CD4-positive, alpha-beta T cell (primary cell): ENCODE measurements at regions of chr7 and their contacts with region 1.

Region 1: DNA sequence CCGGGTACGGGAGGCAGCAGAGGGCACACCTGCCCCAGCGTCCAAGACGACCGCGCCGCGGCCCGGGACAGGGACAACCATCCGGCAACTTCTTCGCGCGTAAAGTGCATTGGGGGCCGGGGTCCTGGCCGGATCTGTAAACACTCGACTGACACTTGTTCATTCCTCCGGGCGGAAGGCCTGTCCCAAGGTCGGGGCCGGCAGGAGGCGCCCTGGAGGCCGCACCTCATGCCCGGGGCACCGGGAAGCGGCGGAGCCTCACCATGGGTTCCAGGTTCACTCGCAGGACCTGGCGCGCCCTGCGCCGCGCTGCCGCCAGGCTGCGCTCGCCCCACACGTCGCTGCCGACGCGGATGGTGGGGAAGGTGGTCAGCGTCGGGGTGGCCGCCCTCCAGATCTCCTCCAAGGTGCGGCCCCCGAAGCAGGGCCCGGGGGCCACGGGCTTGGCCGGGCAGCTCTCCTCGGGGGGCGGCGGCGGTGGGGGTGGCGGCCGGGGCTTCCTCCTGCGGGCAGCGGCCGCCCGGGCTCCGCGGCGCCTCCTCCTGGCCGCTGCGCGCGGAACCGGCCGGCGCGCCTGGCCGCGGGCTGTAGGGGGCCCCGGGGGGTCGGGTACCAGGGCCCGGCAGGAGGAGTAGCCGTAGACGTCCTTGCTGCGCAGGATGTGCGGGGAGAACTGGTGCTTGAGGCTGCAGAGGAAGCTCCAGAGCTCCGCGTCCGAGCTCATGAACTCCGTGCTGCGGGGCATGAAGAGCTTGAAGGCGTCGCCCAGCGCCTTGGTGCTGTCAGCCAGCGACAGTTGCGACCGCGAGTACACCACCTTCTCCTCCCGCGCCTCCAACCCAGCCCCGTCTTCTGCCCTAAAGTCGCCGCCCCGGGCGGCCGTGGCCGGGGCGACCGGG is 746 bp downstream of the CCDC71L start:
- DNase-seq: peak; percentile 58 to 91 (median 72)
- ATAC-seq: peak; percentile 58
- H3K4me3 ChIP-seq: peak overlapping the region; percentile 71
- H3K4me3 Mint-ChIP-seq: peak overlapping the region; percentile 96
- H3K27ac ChIP-seq: peak overlapping the region; percentile 44 to 71
- H3K27ac Mint-ChIP-seq: peak overlapping the region; percentile 92
- H3K4me1 ChIP-seq: peaks cover 20% of the 10 kb centered on the region
- H3K4me1 Mint-ChIP-seq: peaks cover 40% of the 10 kb centered on the region
- H3K27me3 ChIP-seq: no peaks in the 10 kb centered on the region
- H3K27me3 Mint-ChIP-seq: no peaks in the 10 kb centered on the region
- CTCF ChIP-seq: peak; percentile 78

Region 2: GRCh38 chr7:106071356-106071998 is 588.7 kb before region 1 on chr7:
- CTCF ChIA-PET with region 1: no interaction called
- POLR2A ChIA-PET with region 1: no interaction called
- intact Hi-C with region 1: no loop called
- DNase-seq: peak in 13 of 14 experiments; percentile 11 to 83 (median 34)
- ATAC-seq: peak; percentile 95
- H3K4me3 ChIP-seq: peak overlapping the region; percentile 44
- H3K4me3 Mint-ChIP-seq: peak overlapping the region; percentile 54
- H3K27ac ChIP-seq: peak overlapping the region; percentile 79 to 86
- H3K27ac Mint-ChIP-seq: peak overlapping the region; percentile 95
- H3K4me1 ChIP-seq: peaks cover 44% of the 10 kb centered on the region
- H3K4me1 Mint-ChIP-seq: peaks cover 63% of the 10 kb centered on the region
- H3K27me3 ChIP-seq: no peaks in the 10 kb centered on the region
- H3K27me3 Mint-ChIP-seq: no peaks in the 10 kb centered on the region
- CTCF ChIP-seq: no peak

Region 3: DNA sequence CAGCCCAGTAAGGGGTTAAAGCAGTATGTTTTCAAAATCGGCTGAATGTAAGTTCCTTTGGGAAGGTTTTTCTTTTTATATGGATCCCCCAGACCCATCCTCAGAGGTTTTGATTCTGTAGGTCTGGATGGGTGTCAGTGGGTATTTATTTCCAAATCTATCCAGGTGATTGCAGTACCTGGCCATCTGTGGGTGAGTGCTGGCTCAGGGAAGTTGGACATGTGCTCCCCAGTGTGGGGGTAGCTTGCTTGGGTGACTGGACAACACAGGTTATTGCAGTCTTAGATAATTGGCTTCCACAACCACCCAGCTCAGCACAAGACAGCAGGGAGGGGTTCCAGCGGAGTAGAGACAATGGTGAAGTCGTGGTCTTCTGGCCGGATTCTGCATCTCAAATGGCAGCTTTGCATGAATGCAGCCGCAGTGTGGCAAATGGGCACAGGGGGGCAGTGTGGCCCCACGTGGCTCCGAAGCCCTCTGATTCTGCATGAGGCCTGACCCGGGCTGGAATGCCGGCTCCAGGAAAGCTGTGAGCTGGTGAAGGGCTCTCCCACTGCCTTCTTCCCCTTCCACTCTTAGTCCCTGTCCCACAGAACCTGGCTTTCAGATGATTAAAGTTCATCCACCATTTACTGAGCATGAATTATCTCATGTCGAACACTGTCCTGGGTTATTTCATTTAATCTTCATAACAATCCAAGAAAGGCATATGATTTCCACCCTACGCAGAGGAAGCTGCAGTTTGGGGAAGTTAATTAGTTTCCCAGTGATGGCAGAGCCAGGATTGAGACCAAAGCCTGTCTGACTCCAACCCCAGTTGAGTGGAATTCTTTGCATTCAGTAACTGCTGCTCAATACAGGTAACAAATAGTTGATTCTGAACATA is 483.6 kb before region 1 on chr7:
- CTCF ChIA-PET with region 1: interaction called, 3 read pairs
- POLR2A ChIA-PET with region 1: no interaction called
- intact Hi-C with region 1: loop called in 1 of 2 experiments (anchors 10 kb)
- DNase-seq: peak; percentile 37 to 79 (median 61)
- ATAC-seq: peak; percentile 82
- H3K4me3 ChIP-seq: no peak overlapping the region
- H3K4me3 Mint-ChIP-seq: no peak overlapping the region
- H3K27ac ChIP-seq: no peak overlapping the region
- H3K27ac Mint-ChIP-seq: no peak overlapping the region
- H3K4me1 ChIP-seq: peaks cover 6% of the 10 kb centered on the region
- H3K4me1 Mint-ChIP-seq: peaks cover 5% of the 10 kb centered on the region
- H3K27me3 ChIP-seq: peaks cover 0 to 4% of the 10 kb centered on the region in 2 experiments
- H3K27me3 Mint-ChIP-seq: peaks cover 19% of the 10 kb centered on the region
- CTCF ChIP-seq: peak; percentile 95

Region 4: GRCh38 chr7:106598663-106599342 is 61.4 kb before region 1 on chr7:
- CTCF ChIA-PET with region 1: no interaction called
- POLR2A ChIA-PET with region 1: interaction called, 5 read pairs
- intact Hi-C with region 1: loop called in 1 of 2 experiments (anchors 2 kb)
- DNase-seq: peak; percentile 30 to 90 (median 50)
- ATAC-seq: peak; percentile 100
- H3K4me3 ChIP-seq: no peak overlapping the region
- H3K4me3 Mint-ChIP-seq: peak overlapping the region; percentile 42
- H3K27ac ChIP-seq: no peak overlapping the region
- H3K27ac Mint-ChIP-seq: peak overlapping the region; percentile 59
- H3K4me1 ChIP-seq: peaks cover 8% of the 10 kb centered on the region
- H3K4me1 Mint-ChIP-seq: peaks cover 8% of the 10 kb centered on the region
- H3K27me3 ChIP-seq: no peaks in the 10 kb centered on the region
- H3K27me3 Mint-ChIP-seq: peaks cover 5% of the 10 kb centered on the region
- CTCF ChIP-seq: no peak

Region 5: GRCh38 chr7:106634958-106635357 is 25.3 kb before region 1 on chr7:
- CTCF ChIA-PET with region 1: no interaction called
- POLR2A ChIA-PET with region 1: no interaction called
- intact Hi-C with region 1: no loop called
- DNase-seq: no peak
- ATAC-seq: no peak
- H3K4me3 ChIP-seq: no peak overlapping the region
- H3K4me3 Mint-ChIP-seq: no peak overlapping the region
- H3K27ac ChIP-seq: no peak overlapping the region
- H3K27ac Mint-ChIP-seq: no peak overlapping the region
- H3K4me1 ChIP-seq: no peaks in the 10 kb centered on the region
- H3K4me1 Mint-ChIP-seq: no peaks in the 10 kb centered on the region
- H3K27me3 ChIP-seq: peaks cover 0 to 4% of the 10 kb centered on the region in 2 experiments
- H3K27me3 Mint-ChIP-seq: peaks cover 8% of the 10 kb centered on the region
- CTCF ChIP-seq: no peak

Region 6: DNA sequence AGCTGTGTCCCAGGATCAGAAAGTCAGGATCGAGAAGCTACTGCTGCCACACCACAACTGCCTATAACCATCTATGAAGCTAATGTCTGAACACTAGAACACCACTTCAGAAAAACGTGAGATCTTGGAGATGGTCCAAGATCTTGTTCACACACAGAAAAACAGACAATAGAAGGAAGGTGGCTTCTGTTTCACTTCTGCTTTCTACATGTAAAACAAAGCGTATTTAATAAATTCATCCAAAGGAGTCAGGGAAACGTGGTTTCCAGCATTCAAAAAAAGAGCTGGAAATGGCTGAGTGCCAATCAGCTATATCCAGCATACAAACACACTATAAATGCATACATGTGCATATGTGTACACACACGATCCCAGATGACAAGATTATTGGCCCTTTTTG is 71.0 kb after region 1 on chr7:
- CTCF ChIA-PET with region 1: interaction called, 43 read pairs
- POLR2A ChIA-PET with region 1: interaction called, 16 read pairs
- intact Hi-C with region 1: loop called (anchors 1 kb)
- DNase-seq: peak in 2 of 14 experiments; percentile 27 to 38
- ATAC-seq: no peak
- H3K4me3 ChIP-seq: no peak overlapping the region
- H3K4me3 Mint-ChIP-seq: no peak overlapping the region
- H3K27ac ChIP-seq: no peak overlapping the region
- H3K27ac Mint-ChIP-seq: no peak overlapping the region
- H3K4me1 ChIP-seq: peaks cover 5% of the 10 kb centered on the region
- H3K4me1 Mint-ChIP-seq: peaks cover 27% of the 10 kb centered on the region
- H3K27me3 ChIP-seq: no peaks in the 10 kb centered on the region
- H3K27me3 Mint-ChIP-seq: no peaks in the 10 kb centered on the region
- CTCF ChIP-seq: no peak

Region 7: DNA sequence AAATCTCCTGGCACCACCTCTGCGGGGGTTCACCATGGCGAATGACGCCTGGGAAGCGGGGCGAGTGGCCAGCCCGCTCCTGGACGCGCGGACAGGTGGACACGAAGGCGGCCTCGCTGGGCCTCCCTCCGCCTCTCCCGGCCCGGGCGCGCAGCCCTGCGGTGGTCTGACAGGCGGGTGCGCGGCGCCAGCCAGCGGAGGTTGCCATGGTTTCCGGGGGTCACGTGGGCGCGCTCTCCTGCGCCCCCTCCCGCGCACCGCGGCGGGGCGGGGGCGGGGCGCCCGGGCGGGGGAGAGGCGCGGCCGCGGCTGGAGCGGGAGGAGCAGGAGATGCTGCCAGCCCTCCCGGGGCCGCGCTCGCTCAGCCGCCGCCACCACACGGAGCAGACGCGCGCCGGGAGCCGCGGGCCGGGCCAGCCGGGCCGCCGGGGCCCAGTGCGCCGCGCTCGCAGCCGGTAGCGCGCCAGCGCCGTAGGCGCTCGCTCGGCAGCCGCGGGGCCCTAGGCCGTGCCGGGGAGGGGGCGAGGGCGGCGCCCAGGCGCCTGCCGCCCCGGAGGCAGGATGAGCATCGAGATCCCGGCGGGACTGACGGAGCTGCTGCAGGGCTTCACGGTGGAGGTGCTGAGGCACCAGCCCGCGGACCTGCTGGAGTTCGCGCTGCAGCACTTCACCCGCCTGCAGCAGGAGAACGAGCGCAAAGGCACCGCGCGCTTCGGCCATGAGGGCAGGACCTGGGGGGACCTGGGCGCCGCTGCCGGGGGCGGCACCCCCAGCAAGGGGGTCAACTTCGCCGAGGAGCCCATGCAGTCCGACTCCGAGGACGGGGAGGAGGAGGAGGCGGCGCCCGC is 384.4 kb after region 1 on chr7 and contains the start of gene PRKAR2B:
- CTCF ChIA-PET with region 1: no interaction called
- POLR2A ChIA-PET with region 1: no interaction called
- intact Hi-C with region 1: loop called in 1 of 2 experiments (anchors 5 kb)
- DNase-seq: peak; percentile 56 to 93 (median 71)
- ATAC-seq: peak; percentile 94
- H3K4me3 ChIP-seq: peak within 1 kb of the TSS; percentile 60
- H3K4me3 Mint-ChIP-seq: peak within 1 kb of the TSS; percentile 94
- H3K27ac ChIP-seq: no peak within 1 kb of the TSS
- H3K27ac Mint-ChIP-seq: peak within 1 kb of the TSS; percentile 39
- H3K4me1 ChIP-seq: peaks cover 10% of the 10 kb centered on the region
- H3K4me1 Mint-ChIP-seq: peaks cover 13% of the 10 kb centered on the region
- H3K27me3 ChIP-seq: peaks cover 12 to 30% of the 10 kb centered on the region in 2 experiments
- H3K27me3 Mint-ChIP-seq: peaks cover 43% of the 10 kb centered on the region
- CTCF ChIP-seq: no peak
- total RNA-seq, gene PRKAR2B: 0.41 to 0.42 TPM

Region 8: DNA sequence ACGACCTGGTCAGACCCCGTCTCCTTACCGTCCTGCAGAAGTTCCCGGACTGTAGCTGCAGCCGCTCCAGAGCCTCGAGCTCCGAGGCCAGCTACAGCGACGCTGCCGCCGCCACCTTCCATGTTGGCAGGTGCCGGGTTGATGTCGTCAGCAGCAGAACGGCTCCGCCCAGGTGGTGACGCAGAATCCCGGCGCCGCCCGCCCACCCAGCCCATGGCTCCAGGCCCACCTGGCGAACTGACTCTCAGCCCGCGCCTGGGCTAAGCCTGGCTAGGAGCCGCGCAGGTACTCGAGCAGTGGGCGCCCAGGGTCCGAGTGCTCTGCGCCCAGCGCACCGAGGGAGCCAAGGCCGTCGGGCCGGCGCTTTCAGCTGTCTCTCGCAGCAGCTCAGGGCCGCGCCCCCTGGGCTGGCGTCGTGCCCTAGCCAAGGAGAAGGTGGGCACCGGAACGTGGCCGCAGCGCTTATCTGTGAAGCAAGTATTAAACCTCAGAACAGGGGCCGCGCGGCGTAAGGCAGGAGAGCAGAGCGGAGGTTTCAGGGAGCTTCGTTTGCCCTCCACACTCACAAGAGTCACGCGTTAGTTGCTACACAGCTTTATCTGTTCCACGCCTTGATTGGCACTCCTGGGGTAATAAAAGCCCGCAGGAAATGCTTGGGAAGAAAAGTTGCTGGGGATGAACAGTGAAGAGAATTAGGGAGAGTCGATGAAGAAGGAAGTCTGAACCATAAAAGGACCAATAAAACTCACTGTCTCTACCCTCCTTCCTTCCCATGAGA is 903.8 kb after region 1 on chr7 and contains the starts of genes COG5 and DUS4L:
- CTCF ChIA-PET with region 1: no interaction called
- POLR2A ChIA-PET with region 1: no interaction called
- intact Hi-C with region 1: loop called in 1 of 2 experiments (anchors 10 kb)
- DNase-seq: peak; percentile 69 to 94 (median 80)
- ATAC-seq: peak; percentile 85
- H3K4me3 ChIP-seq: peak within 1 kb of the TSS; percentile 83
- H3K4me3 Mint-ChIP-seq: peak within 1 kb of the TSS; percentile 93
- H3K27ac ChIP-seq: peak within 1 kb of the TSS; percentile 87 to 90
- H3K27ac Mint-ChIP-seq: peak within 1 kb of the TSS; percentile 94
- H3K4me1 ChIP-seq: peaks cover 35% of the 10 kb centered on the region
- H3K4me1 Mint-ChIP-seq: peaks cover 70% of the 10 kb centered on the region
- H3K27me3 ChIP-seq: no peaks in the 10 kb centered on the region
- H3K27me3 Mint-ChIP-seq: no peaks in the 10 kb centered on the region
- CTCF ChIP-seq: no peak
- total RNA-seq, gene COG5: 43.4 to 44.5 TPM
- total RNA-seq, gene DUS4L: 14.3 to 14.4 TPM